ENCODE measurements at regions of chr3 and their contacts with region 1.

Region 1: GRCh38 chr3:132343018-132343612 is 25.9 kb downstream of the ACP3 start:
- DNase-seq: peak; percentile 77
- H3K4me3 ChIP-seq: no peak overlapping the region
- H3K27ac ChIP-seq: no peak overlapping the region
- H3K4me1 ChIP-seq: no peaks in the 10 kb centered on the region
- CTCF ChIP-seq: peak; percentile 94

Region 2: GRCh38 chr3:132034486-132035464 is 308.3 kb before region 1 on chr3 and contains the start of gene CPNE4:
- CTCF ChIA-PET with region 1: no interaction called
- POLR2A ChIA-PET with region 1: no interaction called
- intact Hi-C with region 1: loop called (anchors 5 kb)
- DNase-seq: peak; percentile 67
- H3K4me3 ChIP-seq: no peak within 1 kb of the TSS
- H3K27ac ChIP-seq: no peak within 1 kb of the TSS
- H3K4me1 ChIP-seq: no peaks in the 10 kb centered on the region
- CTCF ChIP-seq: peak; percentile 82
- total RNA-seq, gene CPNE4: not detected in 2 replicates

Region 3: GRCh38 chr3:132253262-132253878 is 89.7 kb before region 1 on chr3:
- CTCF ChIA-PET with region 1: interaction called, 5 read pairs
- POLR2A ChIA-PET with region 1: interaction called, 3 read pairs
- intact Hi-C with region 1: loop called (anchors 1 kb)
- DNase-seq: peak; percentile 65
- H3K4me3 ChIP-seq: no peak overlapping the region
- H3K27ac ChIP-seq: no peak overlapping the region
- H3K4me1 ChIP-seq: no peaks in the 10 kb centered on the region
- CTCF ChIP-seq: peak; percentile 89

Region 4: DNA sequence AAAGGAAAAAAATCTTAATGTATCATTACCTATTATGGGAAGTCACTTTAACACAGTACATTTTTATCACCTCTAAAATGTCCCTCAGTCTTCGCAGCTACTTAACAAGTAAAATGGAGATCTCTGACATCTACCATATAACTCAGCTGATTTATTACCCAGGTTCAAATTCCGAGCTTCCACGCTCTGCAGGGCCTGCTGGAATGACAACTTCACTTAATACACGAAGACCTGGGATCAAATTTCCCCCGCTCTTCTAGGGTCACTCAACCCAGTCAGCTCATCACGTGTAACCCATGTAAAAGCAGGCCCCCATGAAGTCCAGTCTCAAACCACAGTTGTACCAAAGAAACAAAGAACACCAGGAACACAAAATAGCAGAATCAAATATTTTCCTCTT is 70.1 kb before region 1 on chr3:
- CTCF ChIA-PET with region 1: no interaction called
- POLR2A ChIA-PET with region 1: no interaction called
- intact Hi-C with region 1: no loop called
- DNase-seq: no peak
- H3K4me3 ChIP-seq: no peak overlapping the region
- H3K27ac ChIP-seq: no peak overlapping the region
- H3K4me1 ChIP-seq: no peaks in the 10 kb centered on the region
- CTCF ChIP-seq: no peak

Region 5: DNA sequence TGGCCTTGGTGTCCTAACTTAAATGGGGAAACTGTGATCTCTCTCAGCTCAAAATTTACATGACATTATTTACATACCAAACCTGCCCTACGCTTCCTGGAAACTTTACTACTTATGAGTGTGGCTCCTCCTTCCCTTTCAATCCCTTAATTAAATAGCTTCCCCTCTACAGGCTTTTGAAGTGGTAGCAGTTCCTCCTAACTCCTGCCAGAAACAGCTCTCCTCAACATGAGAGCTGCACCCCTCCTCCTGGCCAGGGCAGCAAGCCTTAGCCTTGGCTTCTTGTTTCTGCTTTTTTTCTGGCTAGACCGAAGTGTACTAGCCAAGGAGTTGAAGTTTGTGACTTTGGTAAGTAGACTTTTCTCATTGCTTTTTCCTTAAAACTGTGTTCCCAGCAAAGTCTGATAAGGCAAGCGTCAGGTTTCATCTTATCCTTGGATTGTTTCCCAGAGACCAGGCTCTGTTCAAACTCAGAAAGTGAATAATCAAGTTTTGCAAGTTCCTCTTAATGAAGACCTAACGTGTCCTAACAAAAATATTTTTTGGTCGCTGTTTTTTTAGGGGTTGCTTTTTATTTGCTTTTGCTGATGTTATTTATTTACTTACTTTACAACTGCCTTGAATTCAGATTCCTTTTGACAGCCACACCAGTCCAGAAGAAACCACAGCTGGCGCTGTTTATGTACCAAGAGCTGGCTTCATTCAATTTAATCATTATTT is 25.7 kb before region 1 on chr3 and contains the start of gene ACP3:
- CTCF ChIA-PET with region 1: interaction called, 3 read pairs
- POLR2A ChIA-PET with region 1: interaction called, 18 read pairs
- intact Hi-C with region 1: loop called (anchors 2 kb)
- DNase-seq: peak; percentile 86
- H3K4me3 ChIP-seq: peak within 1 kb of the TSS; percentile 63
- H3K27ac ChIP-seq: peak within 1 kb of the TSS; percentile 35
- H3K4me1 ChIP-seq: peaks cover 26% of the 10 kb centered on the region
- CTCF ChIP-seq: peak; percentile 51; the same call in 1 of the 2 replicates
- total RNA-seq, gene ACP3: 4.1 and 4.3 TPM in 2 replicates

Region 6: DNA sequence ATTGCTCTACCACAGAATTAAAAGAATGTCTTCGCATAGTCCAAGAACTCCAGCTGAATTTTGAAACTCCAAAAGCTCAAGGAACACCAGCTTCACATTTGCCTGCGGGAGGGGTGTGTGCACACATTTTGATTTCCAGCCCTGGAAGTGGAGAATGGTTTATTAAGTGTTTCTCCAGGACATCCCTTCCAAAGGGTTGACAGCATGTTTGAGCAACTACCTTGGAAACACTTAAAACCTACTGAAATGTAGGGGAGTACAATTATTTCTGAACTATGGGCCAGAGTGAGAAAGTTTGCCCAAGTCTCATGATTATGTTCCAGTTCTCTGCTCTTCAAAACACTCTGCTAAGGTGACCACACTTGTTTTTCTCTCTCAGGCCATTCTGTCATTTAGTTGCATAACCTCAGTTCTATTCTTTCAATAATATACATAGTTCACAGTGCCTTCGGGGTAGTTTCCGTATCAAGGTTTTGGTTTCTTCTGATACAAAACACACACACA is 18.0 kb before region 1 on chr3:
- CTCF ChIA-PET with region 1: no interaction called
- POLR2A ChIA-PET with region 1: interaction called, 12 read pairs
- intact Hi-C with region 1: no loop called
- DNase-seq: no peak
- H3K4me3 ChIP-seq: no peak overlapping the region
- H3K27ac ChIP-seq: peak overlapping the region; percentile 18
- H3K4me1 ChIP-seq: peaks cover 20% of the 10 kb centered on the region
- CTCF ChIP-seq: no peak

Region 7: DNA sequence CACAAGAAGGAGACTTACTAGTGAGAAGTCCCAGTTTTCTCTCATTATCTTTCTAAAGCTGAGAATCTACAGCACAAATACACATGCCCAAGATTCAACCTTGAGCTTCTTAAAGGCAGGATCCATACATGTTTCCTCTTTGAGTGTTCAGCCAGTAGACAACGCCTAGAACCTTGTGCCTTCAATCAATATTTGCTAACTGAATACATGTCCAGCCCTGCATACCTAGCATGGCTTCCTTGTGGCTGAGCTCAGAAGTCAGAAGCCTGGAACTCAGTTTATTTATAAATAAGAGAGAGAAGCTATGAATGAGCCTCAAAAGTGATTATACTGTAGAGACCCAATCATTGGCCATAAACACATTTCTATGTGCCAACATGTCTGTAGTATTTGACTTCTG is 17.6 kb after region 1 on chr3:
- CTCF ChIA-PET with region 1: no interaction called
- POLR2A ChIA-PET with region 1: no interaction called
- intact Hi-C with region 1: no loop called
- DNase-seq: no peak
- H3K4me3 ChIP-seq: no peak overlapping the region
- H3K27ac ChIP-seq: no peak overlapping the region
- H3K4me1 ChIP-seq: no peaks in the 10 kb centered on the region
- CTCF ChIP-seq: no peak

Region 8: DNA sequence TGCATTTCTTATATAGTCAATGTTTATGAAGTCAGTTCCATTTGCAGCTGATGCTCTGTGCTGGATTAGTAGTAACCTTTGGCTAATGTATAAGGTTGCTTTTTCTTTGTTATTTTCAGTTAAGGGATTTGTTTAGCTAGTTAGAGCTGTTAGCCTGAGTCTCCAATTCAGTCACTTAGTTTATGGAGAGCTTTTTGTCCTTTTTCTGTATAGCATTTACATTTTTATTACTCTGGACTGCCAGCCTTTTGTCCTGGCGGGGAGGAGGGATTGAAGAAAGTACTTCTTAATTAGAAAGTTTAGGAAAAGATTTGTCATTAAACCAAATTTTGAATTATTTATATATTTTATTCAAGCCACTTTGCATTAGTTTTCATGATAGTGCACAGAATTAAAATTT is 126.2 kb after region 1 on chr3:
- CTCF ChIA-PET with region 1: no interaction called
- POLR2A ChIA-PET with region 1: no interaction called
- intact Hi-C with region 1: no loop called
- DNase-seq: no peak
- H3K4me3 ChIP-seq: no peak overlapping the region
- H3K27ac ChIP-seq: no peak overlapping the region
- H3K4me1 ChIP-seq: no peaks in the 10 kb centered on the region
- CTCF ChIP-seq: no peak

Region 9: GRCh38 chr3:132486086-132486485 is 143.0 kb after region 1 on chr3:
- CTCF ChIA-PET with region 1: no interaction called
- POLR2A ChIA-PET with region 1: no interaction called
- intact Hi-C with region 1: no loop called
- DNase-seq: no peak
- H3K4me3 ChIP-seq: no peak overlapping the region
- H3K27ac ChIP-seq: no peak overlapping the region
- H3K4me1 ChIP-seq: no peaks in the 10 kb centered on the region
- CTCF ChIP-seq: no peak

Measured in OCI-LY7 (cell line).